ENCODE measurements at regions of chr17 and their contacts with region 1.

Region 1: GRCh38 chr17:20800146-20800545 is 220.6 kb downstream of the CDRT15L2 start:
- DNase-seq: no peak
- H3K4me3 Mint-ChIP-seq: no peak overlapping the region
- H3K27ac Mint-ChIP-seq: no peak overlapping the region
- H3K4me1 Mint-ChIP-seq: peaks cover 33% of the 10 kb centered on the region
- H3K27me3 Mint-ChIP-seq: no peaks in the 10 kb centered on the region

Region 2: GRCh38 chr17:20852239-20852989 is 52.3 kb after region 1 on chr17:
- intact Hi-C with region 1: loop called (anchors 2 kb)
- DNase-seq: no peak
- H3K4me3 Mint-ChIP-seq: peak overlapping the region; percentile 73
- H3K27ac Mint-ChIP-seq: no peak overlapping the region
- H3K4me1 Mint-ChIP-seq: peaks cover 10% of the 10 kb centered on the region
- H3K27me3 Mint-ChIP-seq: peaks cover 26% of the 10 kb centered on the region

Region 3: GRCh38 chr17:20992987-20993862 is 193.1 kb after region 1 on chr17:
- intact Hi-C with region 1: loop called (anchors 5 kb)
- DNase-seq: peak; percentile 55
- H3K4me3 Mint-ChIP-seq: no peak overlapping the region
- H3K27ac Mint-ChIP-seq: no peak overlapping the region
- H3K4me1 Mint-ChIP-seq: no peaks in the 10 kb centered on the region
- H3K27me3 Mint-ChIP-seq: no peaks in the 10 kb centered on the region